ENCODE measurements at regions of chr5 and their contacts with region 1.

Region 1: GRCh38 chr5:103119765-103120606 is at the starts of genes GIN1 and PPIP5K2:
- H3K4me3 Mint-ChIP-seq: peak within 1 kb of the TSS; percentile 95
- H3K27ac Mint-ChIP-seq: peak within 1 kb of the TSS; percentile 100
- H3K4me1 Mint-ChIP-seq: peaks cover 27% of the 10 kb centered on the region
- H3K27me3 Mint-ChIP-seq: no peaks in the 10 kb centered on the region

Region 2: DNA sequence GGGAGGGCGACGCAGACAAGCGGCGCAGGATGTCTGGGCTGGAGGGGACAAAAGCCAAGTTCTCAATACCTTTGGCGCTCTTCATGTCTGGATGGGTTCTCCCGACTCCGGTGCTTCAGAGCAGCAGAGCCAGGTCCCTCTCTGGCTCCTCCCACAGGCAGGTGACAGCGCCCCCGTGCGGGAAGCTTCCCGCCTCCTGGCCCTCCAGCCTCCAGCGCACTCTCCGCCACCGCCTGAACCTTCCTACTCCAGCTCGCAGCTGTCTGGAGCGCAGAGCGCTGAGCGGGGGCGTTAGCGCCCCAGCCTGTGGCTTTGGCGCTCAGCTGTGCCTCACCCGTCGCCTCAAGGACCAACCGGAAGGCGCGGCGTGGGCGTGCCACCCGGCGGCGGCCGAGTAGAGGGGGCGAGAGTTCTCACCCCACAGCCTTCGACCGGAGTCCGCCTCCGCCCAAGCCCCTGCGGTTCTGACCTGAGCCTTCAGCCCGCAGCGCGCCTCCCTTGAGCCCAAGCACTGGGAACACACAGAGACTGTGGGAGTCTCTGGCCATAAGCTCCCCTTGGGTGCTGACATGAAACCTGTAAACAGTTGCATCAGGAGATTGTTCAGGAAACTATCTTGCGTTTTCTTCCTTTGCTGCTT is 823.7 kb before region 1 on chr5 and contains the start of gene SLCO4C1:
- intact Hi-C with region 1: loop called (anchors 10 kb)
- H3K4me3 Mint-ChIP-seq: peak within 1 kb of the TSS; percentile 84
- H3K27ac Mint-ChIP-seq: peak within 1 kb of the TSS; percentile 78
- H3K4me1 Mint-ChIP-seq: peaks cover 34% of the 10 kb centered on the region
- H3K27me3 Mint-ChIP-seq: peaks cover 10% of the 10 kb centered on the region

Region 3: DNA sequence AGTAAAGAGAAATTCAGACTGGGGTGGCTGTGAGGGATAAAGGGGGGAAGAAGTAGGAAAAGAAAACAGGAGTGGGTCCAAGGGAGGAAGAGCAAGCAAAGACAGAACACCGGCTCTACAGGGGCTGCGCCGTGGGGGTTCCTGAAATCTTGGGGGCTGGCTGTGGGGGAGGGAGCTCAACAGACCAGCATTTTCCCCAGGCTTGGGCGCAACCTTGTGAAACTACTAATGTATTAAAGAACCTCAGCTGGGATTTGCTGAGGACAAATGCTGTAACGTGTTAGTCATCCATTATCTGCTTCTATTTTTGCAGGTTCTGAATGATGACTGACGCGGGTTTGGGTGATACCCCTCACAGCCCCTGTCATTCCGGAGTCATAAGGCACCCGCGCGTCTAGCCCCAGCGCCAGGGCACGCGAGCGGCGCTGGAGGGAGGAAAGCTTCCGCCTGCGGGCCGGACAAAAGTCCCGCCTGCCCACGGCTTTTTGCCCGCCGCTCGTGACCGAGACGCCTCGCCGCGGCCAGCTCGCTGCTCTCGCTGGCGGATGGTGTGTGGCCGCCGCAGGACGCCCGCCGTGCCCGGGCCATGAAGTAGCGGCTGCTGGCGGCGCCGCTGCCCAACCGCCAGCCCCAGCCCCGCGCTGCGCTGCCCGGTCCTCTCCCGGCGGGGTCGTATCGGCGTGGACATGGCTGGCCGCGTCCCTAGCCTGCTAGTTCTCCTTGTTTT is 254.3 kb before region 1 on chr5:
- intact Hi-C with region 1: loop called (anchors 10 kb)
- H3K4me3 Mint-ChIP-seq: peak overlapping the region; percentile 83
- H3K27ac Mint-ChIP-seq: peak overlapping the region; percentile 79
- H3K4me1 Mint-ChIP-seq: peaks cover 8% of the 10 kb centered on the region
- H3K27me3 Mint-ChIP-seq: peaks cover 9% of the 10 kb centered on the region

Region 4: GRCh38 chr5:103258368-103258956 is 138.5 kb after region 1 on chr5 and contains the start of gene MACIR:
- intact Hi-C with region 1: loop called (anchors 1 kb)
- H3K4me3 Mint-ChIP-seq: peak within 1 kb of the TSS; percentile 84
- H3K27ac Mint-ChIP-seq: peak within 1 kb of the TSS; percentile 70
- H3K4me1 Mint-ChIP-seq: peaks cover 31% of the 10 kb centered on the region
- H3K27me3 Mint-ChIP-seq: peaks cover 11% of the 10 kb centered on the region

Measured in dendritic cell treated with granulocyte-macrophage colony-stimulating factor and Interleukin-4, amounts not matched to agents 40 ng/mL and 50 ng/mL, for 4 days (primary cell).